ENCODE measurements at regions of chr4 and their contacts with region 1.

Region 1: GRCh38 chr4:146335763-146336411 is 121.5 kb downstream of the REELD1 start:
- DNase-seq: no peak
- H3K4me3 ChIP-seq: no peak overlapping the region
- H3K27ac ChIP-seq: no peak overlapping the region
- H3K4me1 ChIP-seq: peaks cover 0 to 2% of the 10 kb centered on the region in 2 donors
- H3K27me3 ChIP-seq: no peaks in the 10 kb centered on the region
- CTCF ChIP-seq: no peak

Region 2: GRCh38 chr4:146202665-146203064 is 133.2 kb before region 1 on chr4:
- intact Hi-C with region 1: no loop called
- DNase-seq: no peak
- H3K4me3 ChIP-seq: no peak overlapping the region
- H3K27ac ChIP-seq: no peak overlapping the region
- H3K4me1 ChIP-seq: no peaks in the 10 kb centered on the region
- H3K27me3 ChIP-seq: no peaks in the 10 kb centered on the region
- CTCF ChIP-seq: no peak

Region 3: DNA sequence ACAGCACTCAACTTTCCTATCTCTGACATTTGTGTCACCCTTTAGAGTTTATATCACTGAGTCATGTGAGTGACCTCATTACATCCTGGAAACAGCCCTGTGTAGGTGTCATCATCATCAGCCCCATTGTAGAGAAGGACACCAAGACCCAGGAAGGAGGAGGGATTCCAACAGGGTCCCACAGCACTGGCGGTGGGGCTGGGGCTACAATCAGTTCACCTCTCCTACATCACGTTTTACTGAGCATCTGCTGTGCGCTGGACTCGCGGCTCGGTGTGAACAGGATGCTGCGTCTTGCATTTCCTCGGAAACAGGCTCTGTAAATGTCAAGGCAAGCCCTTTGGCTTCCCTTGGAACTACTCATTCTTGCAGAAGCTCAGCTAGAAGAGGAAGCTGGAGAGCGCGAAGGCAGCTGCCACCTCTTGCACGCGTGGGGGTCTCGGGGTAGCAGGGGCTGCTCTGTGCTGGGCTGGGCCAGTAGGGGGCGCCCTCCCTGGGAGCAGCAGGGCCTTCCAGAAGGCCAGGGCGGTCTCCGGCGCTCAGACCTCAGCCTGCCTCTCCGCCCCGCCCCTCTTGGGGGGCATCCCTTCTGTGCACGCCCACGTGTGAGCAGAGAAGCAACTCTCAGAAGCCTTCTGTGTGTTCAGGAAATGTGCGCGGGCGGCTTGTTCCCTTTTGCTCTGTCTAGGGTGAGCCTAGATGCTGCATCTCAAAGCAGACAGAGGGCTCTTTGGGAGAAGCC is 92.6 kb before region 1 on chr4:
- intact Hi-C with region 1: loop called (anchors 2 kb)
- DNase-seq: no peak
- H3K4me3 ChIP-seq: no peak overlapping the region
- H3K27ac ChIP-seq: peak overlapping the region; percentile 89 to 95
- H3K4me1 ChIP-seq: peaks cover 20 to 33% of the 10 kb centered on the region in 2 donors
- H3K27me3 ChIP-seq: no peaks in the 10 kb centered on the region
- CTCF ChIP-seq: peak in 2 of 3 experiments; percentile 24 to 28